Activated T-helper 1 cell treated with anti-CD3 and anti-CD28 coated beads, Interleukin-12 subunit alpha, Interleukin-12 subunit beta, Interleukin-2, Interleukin-4 antibody, amounts not matched to agents 30 ng/mL and 10 ng/mL and 1 ng/mL, durations not matched to agents 14 hours and 24 hours and 36 hours (primary cell): ENCODE measurements at regions of chr4 and their contacts with region 1.

Region 1: GRCh38 chr4:102344954-102345794 is at the start of gene SLC39A8:
- DNase-seq: peak; percentile 86
- H3K4me3 Mint-ChIP-seq: peak within 1 kb of the TSS; percentile 83
- H3K27ac Mint-ChIP-seq: peak within 1 kb of the TSS; percentile 98
- H3K4me1 Mint-ChIP-seq: peaks cover 48% of the 10 kb centered on the region
- H3K27me3 Mint-ChIP-seq: peaks cover 3% of the 10 kb centered on the region
- total RNA-seq, gene SLC39A8: 85.2 and 87.8 TPM in 2 replicates

Region 2: DNA sequence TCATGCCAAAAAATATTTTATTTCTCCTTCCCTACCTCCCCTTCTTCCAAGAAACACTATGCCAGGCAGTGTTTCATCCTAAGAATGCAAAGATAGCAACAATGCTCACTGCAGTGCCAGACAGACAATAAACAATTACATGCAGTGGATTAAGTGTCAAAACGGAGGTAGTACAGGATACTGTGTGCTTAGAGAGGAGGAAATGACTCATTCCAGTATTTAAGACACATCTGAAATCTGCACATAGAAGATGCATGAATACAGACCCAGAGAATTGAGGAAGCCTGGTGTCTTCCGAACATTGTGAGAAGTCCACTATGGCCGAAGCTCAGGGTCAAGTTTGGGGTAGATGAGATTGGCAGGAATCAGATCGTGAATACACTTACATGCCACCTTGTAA is 1324.2 kb before region 1 on chr4:
- intact Hi-C with region 1: loop called (anchors 10 kb)
- DNase-seq: peak; percentile 16
- H3K4me3 Mint-ChIP-seq: peak overlapping the region; percentile 43
- H3K27ac Mint-ChIP-seq: peak overlapping the region; percentile 67
- H3K4me1 Mint-ChIP-seq: peaks cover 62% of the 10 kb centered on the region
- H3K27me3 Mint-ChIP-seq: no peaks in the 10 kb centered on the region

Region 3: GRCh38 chr4:101419324-101420135 is 925.6 kb before region 1 on chr4:
- intact Hi-C with region 1: loop called (anchors 1 kb)
- DNase-seq: no peak
- H3K4me3 Mint-ChIP-seq: peak overlapping the region; percentile 65
- H3K27ac Mint-ChIP-seq: peak overlapping the region; percentile 79
- H3K4me1 Mint-ChIP-seq: peaks cover 58% of the 10 kb centered on the region
- H3K27me3 Mint-ChIP-seq: peaks cover 11% of the 10 kb centered on the region

Region 4: DNA sequence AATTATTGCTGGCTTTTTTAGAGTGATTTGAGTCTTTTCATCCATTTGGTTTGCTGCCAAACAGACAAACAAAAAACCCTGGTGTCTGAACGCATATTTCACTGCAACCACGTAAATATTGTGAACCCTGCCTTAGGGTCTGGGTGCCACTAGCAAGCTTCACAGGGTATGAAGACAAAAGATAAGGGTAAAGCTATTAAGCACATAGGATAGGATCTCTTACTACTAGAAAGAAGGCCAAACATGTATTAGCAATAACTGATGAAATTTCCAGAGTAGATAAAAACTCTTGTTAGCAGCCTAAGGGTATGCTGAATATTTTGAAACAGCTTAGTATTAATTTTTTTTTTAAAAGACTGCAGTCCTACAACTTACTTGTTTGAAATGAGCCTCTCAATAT is 411.3 kb before region 1 on chr4:
- intact Hi-C with region 1: no loop called
- DNase-seq: no peak
- H3K4me3 Mint-ChIP-seq: no peak overlapping the region
- H3K27ac Mint-ChIP-seq: no peak overlapping the region
- H3K4me1 Mint-ChIP-seq: no peaks in the 10 kb centered on the region
- H3K27me3 Mint-ChIP-seq: no peaks in the 10 kb centered on the region

Region 5: GRCh38 chr4:102064747-102065442 is 280.3 kb before region 1 on chr4:
- intact Hi-C with region 1: no loop called
- DNase-seq: no peak
- H3K4me3 Mint-ChIP-seq: no peak overlapping the region
- H3K27ac Mint-ChIP-seq: no peak overlapping the region
- H3K4me1 Mint-ChIP-seq: no peaks in the 10 kb centered on the region
- H3K27me3 Mint-ChIP-seq: peaks cover 4% of the 10 kb centered on the region

Region 6: GRCh38 chr4:102321260-102321995 is 23.7 kb before region 1 on chr4:
- intact Hi-C with region 1: loop called (anchors 2 kb)
- DNase-seq: no peak
- H3K4me3 Mint-ChIP-seq: peak overlapping the region; percentile 56
- H3K27ac Mint-ChIP-seq: no peak overlapping the region
- H3K4me1 Mint-ChIP-seq: peaks cover 38% of the 10 kb centered on the region
- H3K27me3 Mint-ChIP-seq: no peaks in the 10 kb centered on the region

Region 7: GRCh38 chr4:102535398-102536082 is 190.4 kb after region 1 on chr4:
- intact Hi-C with region 1: loop called (anchors 2 kb)
- DNase-seq: no peak
- H3K4me3 Mint-ChIP-seq: peak overlapping the region; percentile 39
- H3K27ac Mint-ChIP-seq: no peak overlapping the region
- H3K4me1 Mint-ChIP-seq: peaks cover 46% of the 10 kb centered on the region
- H3K27me3 Mint-ChIP-seq: no peaks in the 10 kb centered on the region

Region 8: DNA sequence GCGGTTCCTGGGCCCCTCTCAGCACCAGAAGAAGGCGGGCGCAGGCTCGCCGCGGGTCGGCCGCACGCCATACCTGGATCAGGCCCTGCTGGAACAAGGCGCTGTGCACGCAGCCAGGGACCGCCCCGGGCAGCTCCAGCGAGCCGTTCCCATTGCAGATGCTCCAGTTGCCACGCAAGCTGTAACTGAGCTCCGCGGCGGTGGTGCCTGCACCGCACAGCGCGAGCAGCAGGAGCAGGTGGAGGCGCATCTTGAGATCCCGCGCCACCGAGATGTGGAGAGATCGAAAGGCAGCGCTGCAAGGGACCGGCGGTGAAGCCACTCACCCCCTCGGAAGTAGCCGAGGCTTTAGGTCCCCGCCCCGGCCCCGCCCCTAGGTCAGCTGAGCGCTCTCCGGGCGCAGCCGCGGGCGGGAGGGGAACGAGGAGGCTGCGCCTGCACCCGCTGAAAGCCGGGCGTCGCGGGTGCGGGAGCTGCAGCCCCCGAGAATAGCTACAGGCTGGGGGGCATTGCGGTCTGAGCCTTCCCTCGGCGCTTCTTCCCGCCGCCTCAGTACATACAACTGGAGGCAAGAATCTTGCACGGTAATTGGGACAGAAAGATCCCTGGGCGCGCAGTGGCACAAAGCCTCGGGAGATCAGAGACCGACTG is 415.6 kb after region 1 on chr4 and contains the start of gene MANBA:
- intact Hi-C with region 1: loop called (anchors 2 kb)
- DNase-seq: peak; percentile 77
- H3K4me3 Mint-ChIP-seq: peak within 1 kb of the TSS; percentile 96
- H3K27ac Mint-ChIP-seq: peak within 1 kb of the TSS; percentile 90
- H3K4me1 Mint-ChIP-seq: peaks cover 31% of the 10 kb centered on the region
- H3K27me3 Mint-ChIP-seq: peaks cover 13% of the 10 kb centered on the region
- total RNA-seq, gene MANBA: 7.5 and 8.0 TPM in 2 replicates

Region 9: GRCh38 chr4:103075901-103076739 is 730.9 kb after region 1 on chr4:
- intact Hi-C with region 1: loop called (anchors 2 kb)
- DNase-seq: peak; percentile 60
- H3K4me3 Mint-ChIP-seq: peak overlapping the region; percentile 99
- H3K27ac Mint-ChIP-seq: peak overlapping the region; percentile 100
- H3K4me1 Mint-ChIP-seq: peaks cover 51% of the 10 kb centered on the region
- H3K27me3 Mint-ChIP-seq: no peaks in the 10 kb centered on the region